Heart left ventricle (tissue), 16 donors: ENCODE measurements at regions of chr16 and their contacts with region 1.

Region 1: GRCh38 chr16:12067714-12068401 is 91.3 kb downstream of the SNX29 start:
- DNase-seq: peak in 3 of 5 donors; percentile 41 to 46 (median 43)
- ATAC-seq: peak; percentile 57 to 79 (median 68)
- H3K4me3 ChIP-seq: no peak overlapping the region
- H3K27ac ChIP-seq: no peak overlapping the region
- H3K4me1 ChIP-seq: peaks cover 0 to 14% (median 5%) of the 10 kb centered on the region in 12 donors
- H3K27me3 ChIP-seq: no peaks in the 10 kb centered on the region
- CTCF ChIP-seq: peak; percentile 80 to 97 (median 94)
- POLR2A ChIP-seq: no peak

Region 2: DNA sequence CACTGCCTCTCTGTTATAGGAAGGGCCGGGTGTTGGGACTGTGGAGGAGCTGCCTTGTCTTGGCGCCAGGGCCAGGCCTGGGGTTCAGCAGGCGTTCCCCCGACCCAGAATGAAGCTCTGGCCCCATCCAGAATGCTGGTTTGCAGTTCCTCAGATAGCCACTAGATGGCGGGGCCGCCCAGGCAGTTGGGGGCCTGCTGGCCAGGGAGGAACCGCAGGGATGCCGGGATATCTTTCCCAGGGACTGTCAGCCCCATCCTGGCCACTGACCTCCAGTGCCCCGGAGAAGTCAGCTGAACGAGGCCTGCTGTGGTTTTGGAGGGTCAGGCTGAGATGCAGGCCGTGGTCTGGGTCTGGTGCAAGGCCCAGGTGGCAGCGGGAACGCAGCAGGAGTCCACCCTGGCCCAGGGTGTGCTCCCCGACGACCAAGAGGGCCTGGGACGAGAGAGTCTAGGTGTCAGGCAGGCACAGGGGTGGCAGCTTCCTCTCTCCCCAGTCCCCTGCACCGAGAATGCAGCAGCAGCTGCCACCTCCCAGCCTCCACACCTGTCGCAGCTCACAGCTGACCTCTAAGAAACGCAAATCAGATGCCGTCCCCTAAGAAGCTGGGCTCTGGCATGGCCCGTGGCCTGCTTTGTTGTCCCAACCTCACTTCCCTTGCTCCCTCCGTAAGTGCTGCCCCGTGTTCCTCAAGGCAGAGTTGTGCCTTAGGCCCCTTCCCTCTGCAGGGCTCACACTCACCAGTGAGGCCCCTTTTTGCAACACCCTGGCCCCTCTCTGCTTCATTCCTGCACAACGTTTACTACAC is 671.4 kb before region 1 on chr16:
- intact Hi-C with region 1: loop called in 7 of 10 experiments (anchors 2 to 10 kb)
- DNase-seq: peak; percentile 71 to 83 (median 76)
- ATAC-seq: peak; percentile 63 to 84 (median 84)
- H3K4me3 ChIP-seq: no peak overlapping the region
- H3K27ac ChIP-seq: peak overlapping the region in 3 of 12 donors; percentile 25 to 54 (median 30)
- H3K4me1 ChIP-seq: peaks cover 0 to 7% (median 2%) of the 10 kb centered on the region in 12 donors
- H3K27me3 ChIP-seq: peaks cover 0 to 3% (median 0%) of the 10 kb centered on the region in 9 donors
- CTCF ChIP-seq: peak; percentile 96 to 100 (median 98)
- POLR2A ChIP-seq: no peak

Region 3: DNA sequence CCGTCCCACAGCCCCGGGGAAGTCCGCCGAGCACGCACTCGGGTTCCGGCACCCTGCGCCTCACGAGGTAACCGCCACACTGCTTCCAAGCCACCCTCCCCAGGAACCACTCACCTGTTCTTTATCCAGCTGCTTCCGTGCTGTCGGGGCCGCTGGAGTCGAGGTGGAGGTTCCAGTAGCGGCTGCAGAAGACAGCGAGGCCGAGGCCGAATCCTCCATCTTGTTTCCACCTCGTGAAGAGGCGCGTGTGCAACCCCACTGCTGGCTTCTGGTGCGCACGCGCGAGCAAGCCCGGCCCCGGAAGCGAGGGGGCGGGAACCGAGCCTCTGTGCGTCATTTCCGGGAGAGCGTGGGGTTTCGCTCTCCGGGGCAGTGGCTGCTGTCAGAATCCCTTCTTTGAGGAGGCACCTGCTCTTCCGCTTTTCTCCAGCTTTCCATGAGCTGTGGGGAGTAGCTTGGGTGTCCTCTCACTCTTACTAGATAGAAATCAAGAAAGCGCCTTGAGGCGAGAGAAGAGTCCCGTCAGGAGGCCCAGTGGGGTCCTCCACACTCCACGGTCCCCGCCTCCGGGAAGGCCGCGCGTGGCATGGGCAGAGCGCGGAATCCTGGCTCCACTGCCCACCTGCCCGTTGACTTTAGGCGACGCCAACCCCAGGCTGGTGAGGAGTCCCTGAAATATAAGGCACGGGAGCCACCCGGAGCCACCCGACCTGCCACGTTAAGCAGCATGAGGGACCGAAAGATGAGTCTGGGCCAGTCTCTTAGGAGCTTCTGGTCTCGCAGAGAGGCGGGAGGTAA is 216.4 kb before region 1 on chr16 and contains the start of gene RSL1D1:
- intact Hi-C with region 1: loop called in 1 of 10 experiments (anchors 10 kb)
- DNase-seq: peak; percentile 92 to 95 (median 93)
- ATAC-seq: peak; percentile 97 to 99 (median 98)
- H3K4me3 ChIP-seq: peak within 1 kb of the TSS; percentile 59 to 98 (median 77)
- H3K27ac ChIP-seq: peak within 1 kb of the TSS; percentile 49 to 89 (median 86)
- H3K4me1 ChIP-seq: peaks cover 2 to 50% (median 33%) of the 10 kb centered on the region in 12 donors
- H3K27me3 ChIP-seq: no peaks in the 10 kb centered on the region
- CTCF ChIP-seq: no peak
- POLR2A ChIP-seq: peak in 1 of 2 donors; percentile 88
- total RNA-seq, gene RSL1D1: 81.4 to 125 (median 92.3) TPM

Region 4: DNA sequence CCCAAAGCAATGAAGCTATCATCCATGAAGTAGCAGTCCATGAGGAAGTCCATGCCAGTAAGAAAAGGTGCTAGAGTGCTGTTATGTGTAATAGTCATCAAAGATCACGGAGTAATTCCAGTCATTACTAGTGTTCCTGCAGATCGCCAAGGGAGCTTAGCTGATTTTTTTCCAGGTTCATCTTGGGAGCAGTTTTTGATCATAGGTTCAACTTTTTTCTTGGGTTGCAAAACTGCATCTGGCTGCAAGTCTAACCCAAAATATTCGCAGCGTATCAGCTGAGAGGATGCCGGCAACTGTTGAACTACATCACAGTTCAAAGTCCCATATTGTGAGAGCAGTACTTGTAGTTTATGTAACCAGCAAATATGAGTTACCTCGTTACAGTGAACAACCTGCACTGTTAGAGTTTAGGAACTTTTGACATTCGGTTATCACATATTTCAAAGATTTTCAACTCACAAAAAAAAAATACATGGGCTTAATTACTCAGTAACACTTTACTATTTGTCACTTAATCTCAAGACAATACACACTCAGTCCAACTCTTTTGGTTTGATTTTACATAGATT is 198.1 kb before region 1 on chr16:
- intact Hi-C with region 1: loop called in 1 of 10 experiments (anchors 10 kb)
- DNase-seq: no peak
- ATAC-seq: no peak
- H3K4me3 ChIP-seq: no peak overlapping the region
- H3K27ac ChIP-seq: no peak overlapping the region
- H3K4me1 ChIP-seq: peaks cover 0 to 41% (median 17%) of the 10 kb centered on the region in 12 donors
- H3K27me3 ChIP-seq: no peaks in the 10 kb centered on the region
- CTCF ChIP-seq: no peak
- POLR2A ChIP-seq: no peak

Region 5: DNA sequence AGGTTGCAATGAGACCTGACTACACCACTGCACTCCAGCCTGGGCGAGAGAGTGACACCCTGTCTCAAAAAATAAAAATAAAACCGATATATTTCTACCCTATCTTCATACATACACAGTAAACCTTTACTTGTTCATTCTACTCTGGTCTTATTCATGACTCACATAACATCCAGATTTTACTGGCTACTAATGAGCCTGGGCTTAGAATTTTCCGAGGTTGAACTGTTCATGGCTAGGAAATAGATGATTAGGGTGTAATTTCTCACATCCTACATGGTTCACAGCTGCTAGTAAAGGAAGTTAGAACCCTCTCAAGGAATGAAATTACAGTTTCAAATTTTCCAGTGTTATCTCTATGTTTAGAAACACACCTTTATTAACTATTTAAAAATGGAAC is 166.8 kb before region 1 on chr16:
- intact Hi-C with region 1: no loop called
- DNase-seq: no peak
- ATAC-seq: peak in 1 of 4 donors; percentile 47
- H3K4me3 ChIP-seq: no peak overlapping the region
- H3K27ac ChIP-seq: no peak overlapping the region
- H3K4me1 ChIP-seq: peaks cover 0 to 31% (median 7%) of the 10 kb centered on the region in 12 donors
- H3K27me3 ChIP-seq: no peaks in the 10 kb centered on the region
- CTCF ChIP-seq: no peak
- POLR2A ChIP-seq: no peak

Region 6: GRCh38 chr16:11949527-11949926 is 118.3 kb before region 1 on chr16:
- intact Hi-C with region 1: loop called in 9 of 10 experiments (anchors 1 to 5 kb)
- DNase-seq: peak in 1 of 5 donors; percentile 18
- ATAC-seq: peak in 3 of 4 donors; percentile 68 to 81 (median 73)
- H3K4me3 ChIP-seq: no peak overlapping the region
- H3K27ac ChIP-seq: no peak overlapping the region
- H3K4me1 ChIP-seq: no peaks in the 10 kb centered on the region
- H3K27me3 ChIP-seq: no peaks in the 10 kb centered on the region
- CTCF ChIP-seq: peak in 11 of 12 donors; percentile 23 to 58 (median 47)
- POLR2A ChIP-seq: no peak

Region 7: DNA sequence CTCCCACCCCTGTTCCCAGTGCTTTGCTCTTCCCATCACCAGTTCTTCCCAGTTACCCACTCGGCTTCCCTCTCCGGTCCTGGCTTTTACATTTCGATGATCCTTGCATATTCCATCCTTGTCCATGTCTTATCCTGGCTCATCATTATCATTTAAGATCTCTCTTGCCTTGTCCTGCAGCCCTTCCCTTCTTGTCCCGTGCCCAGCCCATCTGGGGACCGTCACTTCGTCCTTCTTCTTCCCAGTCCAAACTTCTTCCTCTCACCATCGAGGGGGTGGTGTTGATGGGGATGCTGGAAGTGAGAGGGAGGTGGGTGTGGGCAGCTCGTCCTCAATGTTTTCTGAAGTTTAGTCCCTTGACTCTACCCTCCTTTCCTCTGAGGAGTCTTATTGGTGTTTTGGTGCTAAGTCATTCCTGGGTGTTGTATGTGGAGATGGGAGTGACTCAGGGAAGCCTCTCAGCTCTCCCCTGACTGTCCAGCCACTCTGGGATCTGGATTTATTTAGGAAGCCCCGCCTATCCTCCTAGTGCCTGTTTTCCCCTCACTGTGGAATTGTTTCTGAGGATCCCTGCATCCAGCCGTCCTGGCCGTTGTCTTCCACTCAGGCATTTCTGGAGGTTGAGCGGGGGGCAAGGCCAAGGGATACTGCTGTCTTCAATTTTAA is 90.3 kb before region 1 on chr16:
- intact Hi-C with region 1: loop called in 9 of 10 experiments (anchors 2 to 10 kb)
- DNase-seq: peak in 3 of 5 donors; percentile 14 to 34 (median 19)
- ATAC-seq: peak in 3 of 4 donors; percentile 60 to 73 (median 66)
- H3K4me3 ChIP-seq: peak overlapping the region; percentile 83 to 100 (median 92)
- H3K27ac ChIP-seq: peak overlapping the region in 10 of 12 donors; percentile 65 to 92 (median 82)
- H3K4me1 ChIP-seq: peaks cover 0 to 24% (median 17%) of the 10 kb centered on the region in 12 donors
- H3K27me3 ChIP-seq: no peaks in the 10 kb centered on the region
- CTCF ChIP-seq: no peak
- POLR2A ChIP-seq: no peak

Region 8: GRCh38 chr16:11994143-11995119 is 73.4 kb before region 1 on chr16:
- intact Hi-C with region 1: no loop called
- DNase-seq: peak; percentile 52 to 70 (median 55)
- ATAC-seq: peak in 3 of 4 donors; percentile 80 to 98 (median 90)
- H3K4me3 ChIP-seq: no peak overlapping the region
- H3K27ac ChIP-seq: peak overlapping the region in 8 of 12 donors; percentile 15 to 89 (median 44)
- H3K4me1 ChIP-seq: peaks cover 0 to 53% (median 13%) of the 10 kb centered on the region in 12 donors
- H3K27me3 ChIP-seq: no peaks in the 10 kb centered on the region
- CTCF ChIP-seq: no peak
- POLR2A ChIP-seq: no peak